Ascending aorta (tissue), 2 donors: ENCODE measurements at regions of chr13 and their contacts with region 1.

Region 1: DNA sequence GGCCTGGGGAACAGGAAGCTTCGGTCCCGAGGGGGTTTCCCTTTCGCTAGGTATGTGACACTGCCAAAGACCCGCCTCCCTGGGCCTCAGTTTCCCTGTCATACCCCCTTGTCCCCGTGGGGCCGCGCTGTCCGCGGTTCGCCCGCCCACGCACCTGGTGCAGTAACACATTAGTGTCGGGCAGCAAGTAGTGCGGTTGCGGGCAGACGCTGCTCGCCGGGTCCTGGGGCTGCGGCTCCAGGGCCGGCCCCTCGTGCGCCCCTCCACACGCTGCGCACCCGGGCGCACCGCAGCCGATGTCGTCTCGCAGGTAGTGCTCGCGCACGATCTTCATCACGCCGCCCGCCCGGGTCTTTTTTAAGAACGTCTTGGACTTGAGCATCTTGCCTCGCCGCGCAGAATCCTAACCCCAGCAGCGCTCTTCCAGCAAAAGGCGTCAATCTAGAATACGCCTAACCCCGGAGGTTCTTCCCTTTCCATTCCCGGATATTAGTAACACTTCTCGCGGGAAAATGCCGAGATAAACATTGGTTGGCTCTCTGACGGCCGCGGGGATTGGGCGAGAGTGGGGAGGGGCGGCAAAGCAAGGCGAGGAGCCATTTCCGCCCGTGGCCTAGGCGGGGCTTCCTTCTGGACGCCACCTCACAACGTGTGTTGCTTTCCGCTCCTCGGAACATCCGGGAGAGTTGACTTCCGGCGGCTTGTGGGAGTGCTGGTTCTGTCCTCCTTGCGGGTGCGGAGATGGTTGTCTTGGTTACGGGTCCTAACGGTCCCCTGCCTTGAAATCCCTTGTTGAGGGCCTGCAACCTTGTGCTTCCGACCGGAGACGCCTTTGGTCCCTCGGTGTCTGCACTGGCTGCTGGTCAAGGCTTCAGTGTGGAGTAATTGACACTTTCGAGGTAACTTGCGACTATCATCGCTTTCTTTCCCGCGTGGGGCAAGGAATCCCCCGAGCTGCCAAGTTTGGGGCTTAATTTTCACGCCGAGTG is at the starts of genes DIS3 and PIBF1:
- DNase-seq: peak; percentile 93 to 99
- H3K4me3 ChIP-seq: peak within 1 kb of the TSS; percentile 88 to 92
- H3K27ac ChIP-seq: peak within 1 kb of the TSS; percentile 85 to 92
- H3K4me1 ChIP-seq: peaks cover 0 to 21% of the 10 kb centered on the region in 2 donors
- H3K27me3 ChIP-seq: no peaks in the 10 kb centered on the region
- CTCF ChIP-seq: no peak
- total RNA-seq, gene DIS3: 12.8 TPM
- total RNA-seq, gene PIBF1: 17.0 TPM

Region 2: DNA sequence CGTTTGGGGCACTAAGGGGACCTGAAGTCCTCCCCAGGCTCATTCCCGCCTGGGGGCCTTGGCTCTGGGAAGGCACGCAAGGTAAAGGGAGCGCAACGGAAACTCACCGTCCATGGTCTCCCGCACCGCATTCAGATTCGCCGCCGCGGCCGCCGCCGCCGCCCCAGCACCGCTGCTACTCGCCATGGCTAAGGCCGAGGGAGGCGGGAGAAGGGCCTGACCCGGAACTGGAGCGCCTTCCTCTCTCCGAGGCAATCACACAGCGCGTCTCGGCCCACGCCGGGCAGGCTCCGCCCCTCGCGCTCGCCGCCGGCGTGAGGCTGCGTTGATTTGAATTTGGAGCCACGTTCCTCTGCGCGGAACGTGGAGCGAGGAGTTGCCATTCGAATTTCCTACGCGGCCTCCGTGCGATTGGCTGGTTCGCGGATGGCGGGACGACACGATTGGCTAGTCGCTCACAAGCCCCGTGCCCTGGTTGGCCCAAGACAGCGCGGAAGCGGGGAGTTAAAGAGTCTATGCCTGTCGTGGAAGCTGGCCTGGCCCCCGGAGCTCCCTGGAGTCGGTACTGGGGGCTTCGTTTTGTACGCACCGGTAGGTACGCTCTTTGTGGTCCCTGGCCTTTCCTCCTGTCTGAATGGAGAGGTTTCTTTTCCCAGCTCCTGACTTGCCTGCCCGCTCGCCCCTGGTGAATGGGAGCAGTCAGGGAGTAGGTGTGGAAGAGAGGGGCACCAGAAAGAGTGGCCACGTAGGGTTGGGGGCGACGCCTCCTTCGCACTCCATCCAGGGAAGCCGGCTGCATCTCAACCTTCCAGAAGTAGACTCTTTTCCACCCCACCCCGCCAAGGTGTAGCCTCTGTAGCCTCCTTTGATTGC is 54.1 kb before region 1 on chr13 and contains the starts of genes BORA and MZT1:
- intact Hi-C with region 1: loop called (anchors 1 kb)
- DNase-seq: peak; percentile 87 to 98
- H3K4me3 ChIP-seq: peak within 1 kb of the TSS; percentile 76 to 82
- H3K27ac ChIP-seq: peak within 1 kb of the TSS; percentile 17 to 51
- H3K4me1 ChIP-seq: peaks cover 0 to 15% of the 10 kb centered on the region in 2 donors
- H3K27me3 ChIP-seq: no peaks in the 10 kb centered on the region
- CTCF ChIP-seq: no peak
- total RNA-seq, gene BORA: not detected
- total RNA-seq, gene MZT1: 4.4 TPM